Spleen (tissue), 13 donors: ENCODE measurements at regions of chr1 and their contacts with region 1.

Region 1: DNA sequence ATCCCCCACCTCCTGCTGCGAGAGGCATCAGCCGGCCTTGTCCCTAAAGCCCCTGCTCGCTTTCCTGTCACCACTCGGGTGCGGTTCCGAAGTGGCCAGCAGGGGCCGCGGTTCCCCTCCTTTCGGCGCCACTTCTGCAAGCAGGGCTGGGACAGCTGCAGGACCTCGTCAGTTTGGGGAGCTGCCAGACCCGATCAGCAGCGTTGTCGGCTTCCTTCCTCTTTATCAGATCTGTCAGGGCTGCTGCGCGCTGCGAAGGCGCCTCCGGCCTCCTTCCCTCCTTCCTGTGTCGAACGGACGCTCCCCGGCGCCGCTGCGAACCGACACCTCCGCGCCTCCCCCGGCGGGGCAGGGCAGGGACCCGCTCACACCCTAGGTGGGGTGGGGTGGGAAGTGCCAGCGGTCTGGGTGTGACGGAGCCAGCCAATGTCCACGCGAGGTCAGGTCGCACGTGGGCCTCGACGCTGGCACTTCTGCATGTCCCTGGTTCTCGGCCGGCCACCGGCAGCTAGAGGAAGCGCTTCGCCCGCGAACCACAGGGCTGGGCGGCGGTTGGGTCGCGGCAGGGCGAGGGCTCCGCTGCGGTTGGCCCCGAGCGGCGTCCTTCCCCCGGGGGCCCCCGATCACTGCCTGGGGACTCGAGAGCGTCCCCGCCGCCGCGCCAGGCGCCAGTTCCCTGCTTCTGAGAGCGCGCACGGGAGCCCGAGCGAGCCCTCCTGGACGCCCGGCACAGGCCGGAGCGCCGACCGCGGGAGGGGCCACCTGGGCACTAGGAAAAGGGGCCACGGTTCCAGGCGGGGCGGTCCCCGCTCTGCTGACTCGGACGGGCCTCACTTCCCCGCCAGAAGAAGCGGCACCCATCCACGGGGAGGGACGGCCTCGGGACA is 81.8 kb downstream of the RUNX3 start:
- DNase-seq: peak; percentile 98
- H3K4me3 ChIP-seq: peak overlapping the region; percentile 37 to 69 (median 44)
- H3K27ac ChIP-seq: peak overlapping the region; percentile 74 to 92 (median 88)
- H3K4me1 ChIP-seq: peaks cover 10 to 38% (median 28%) of the 10 kb centered on the region in 6 donors
- H3K27me3 ChIP-seq: no peaks in the 10 kb centered on the region
- CTCF ChIP-seq: peak; percentile 92 to 98 (median 95)
- POLR2A ChIP-seq: no peak

Region 2: DNA sequence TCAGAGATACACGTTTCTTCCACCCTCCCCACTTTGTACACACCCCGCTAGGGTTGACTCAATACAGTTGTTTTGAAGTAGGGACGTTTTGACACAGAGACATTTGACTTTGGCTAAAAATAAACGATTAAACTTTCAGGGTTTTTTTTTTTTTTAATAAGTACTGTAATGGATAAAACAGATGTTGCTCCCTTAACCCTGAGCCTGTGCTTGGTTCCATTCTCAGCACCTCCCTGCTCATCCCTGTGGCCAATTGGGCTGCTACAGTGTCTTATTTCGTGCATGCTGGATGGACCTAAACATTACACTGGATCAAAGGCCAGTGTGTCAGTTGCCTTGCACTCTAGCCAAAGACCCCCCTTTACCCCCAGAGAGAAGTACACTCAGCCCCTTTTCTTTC is 512.2 kb before region 1 on chr1:
- intact Hi-C with region 1: no loop called
- DNase-seq: no peak
- H3K4me3 ChIP-seq: no peak overlapping the region
- H3K27ac ChIP-seq: no peak overlapping the region
- H3K4me1 ChIP-seq: peaks cover 0 to 8% (median 0%) of the 10 kb centered on the region in 6 donors
- H3K27me3 ChIP-seq: peaks cover 0 to 10% (median 0%) of the 10 kb centered on the region in 7 donors
- CTCF ChIP-seq: no peak
- POLR2A ChIP-seq: no peak

Region 3: GRCh38 chr1:24910751-24911650 is 62.8 kb after region 1 on chr1:
- intact Hi-C with region 1: loop called (anchors 10 kb)
- DNase-seq: peak; percentile 91
- H3K4me3 ChIP-seq: peak overlapping the region in 1 of 8 donors; percentile 32
- H3K27ac ChIP-seq: peak overlapping the region; percentile 27 to 90 (median 73)
- H3K4me1 ChIP-seq: peaks cover under 1 to 88% (median 49%) of the 10 kb centered on the region in 6 donors
- H3K27me3 ChIP-seq: no peaks in the 10 kb centered on the region
- CTCF ChIP-seq: no peak
- POLR2A ChIP-seq: peak in 2 of 3 donors; percentile 36 to 80

Region 4: GRCh38 chr1:25037174-25038074 is 189.2 kb after region 1 on chr1:
- intact Hi-C with region 1: loop called (anchors 5 kb)
- DNase-seq: peak; percentile 87
- H3K4me3 ChIP-seq: peak overlapping the region in 1 of 8 donors; percentile 15
- H3K27ac ChIP-seq: peak overlapping the region in 1 of 8 donors; percentile 40
- H3K4me1 ChIP-seq: peaks cover 21 to 58% (median 39%) of the 10 kb centered on the region in 6 donors
- H3K27me3 ChIP-seq: peaks cover 0 to 10% (median 0%) of the 10 kb centered on the region in 7 donors
- CTCF ChIP-seq: peak; percentile 60 to 88 (median 78)
- POLR2A ChIP-seq: no peak

Region 5: DNA sequence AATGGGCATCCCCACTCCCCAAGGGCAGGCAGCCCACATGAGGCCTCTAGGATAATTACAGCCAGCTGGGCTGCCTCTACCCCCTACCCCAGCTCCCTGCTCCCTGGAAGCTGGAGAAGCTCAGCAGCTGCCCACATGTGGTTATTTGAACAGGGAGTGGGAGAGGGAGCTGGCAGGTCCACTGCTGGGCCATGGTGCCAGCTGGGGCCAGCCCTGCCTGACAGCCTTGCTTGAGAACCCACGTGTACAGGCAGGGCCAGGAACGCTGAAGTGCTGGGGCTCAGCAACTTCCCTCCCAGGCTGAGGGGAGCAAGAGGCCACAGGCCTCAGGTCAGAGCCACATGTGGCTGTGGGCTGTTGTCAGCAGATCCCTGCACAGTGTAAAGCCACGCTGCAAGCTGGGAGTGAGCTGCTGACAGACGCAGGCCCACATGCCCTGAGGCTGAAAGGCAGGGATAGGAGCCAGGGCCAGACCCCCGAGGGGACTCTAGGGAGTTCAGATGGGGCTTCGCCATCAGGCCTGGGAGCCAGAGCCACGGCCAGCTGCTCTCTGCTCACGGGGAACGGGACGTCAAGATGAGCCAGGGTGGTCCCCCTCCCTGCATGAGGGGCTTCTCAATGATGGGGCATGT is 255.0 kb after region 1 on chr1:
- intact Hi-C with region 1: loop called (anchors 5 kb)
- DNase-seq: no peak
- H3K4me3 ChIP-seq: no peak overlapping the region
- H3K27ac ChIP-seq: no peak overlapping the region
- H3K4me1 ChIP-seq: peaks cover 12 to 45% (median 32%) of the 10 kb centered on the region in 6 donors
- H3K27me3 ChIP-seq: peaks cover 0 to 36% (median 0%) of the 10 kb centered on the region in 7 donors
- CTCF ChIP-seq: no peak
- POLR2A ChIP-seq: no peak

Region 6: GRCh38 chr1:25204797-25205480 is 356.7 kb after region 1 on chr1:
- intact Hi-C with region 1: loop called (anchors 5 kb)
- DNase-seq: no peak
- H3K4me3 ChIP-seq: no peak overlapping the region
- H3K27ac ChIP-seq: no peak overlapping the region
- H3K4me1 ChIP-seq: peaks cover 0 to 6% (median 3%) of the 10 kb centered on the region in 6 donors
- H3K27me3 ChIP-seq: peaks cover 0 to 3% (median 0%) of the 10 kb centered on the region in 7 donors
- CTCF ChIP-seq: peak; percentile 45 to 84 (median 72)
- POLR2A ChIP-seq: no peak